HEK293T (cell line): ENCODE measurements at regions of chr2 and their contacts with region 1.

Region 1: DNA sequence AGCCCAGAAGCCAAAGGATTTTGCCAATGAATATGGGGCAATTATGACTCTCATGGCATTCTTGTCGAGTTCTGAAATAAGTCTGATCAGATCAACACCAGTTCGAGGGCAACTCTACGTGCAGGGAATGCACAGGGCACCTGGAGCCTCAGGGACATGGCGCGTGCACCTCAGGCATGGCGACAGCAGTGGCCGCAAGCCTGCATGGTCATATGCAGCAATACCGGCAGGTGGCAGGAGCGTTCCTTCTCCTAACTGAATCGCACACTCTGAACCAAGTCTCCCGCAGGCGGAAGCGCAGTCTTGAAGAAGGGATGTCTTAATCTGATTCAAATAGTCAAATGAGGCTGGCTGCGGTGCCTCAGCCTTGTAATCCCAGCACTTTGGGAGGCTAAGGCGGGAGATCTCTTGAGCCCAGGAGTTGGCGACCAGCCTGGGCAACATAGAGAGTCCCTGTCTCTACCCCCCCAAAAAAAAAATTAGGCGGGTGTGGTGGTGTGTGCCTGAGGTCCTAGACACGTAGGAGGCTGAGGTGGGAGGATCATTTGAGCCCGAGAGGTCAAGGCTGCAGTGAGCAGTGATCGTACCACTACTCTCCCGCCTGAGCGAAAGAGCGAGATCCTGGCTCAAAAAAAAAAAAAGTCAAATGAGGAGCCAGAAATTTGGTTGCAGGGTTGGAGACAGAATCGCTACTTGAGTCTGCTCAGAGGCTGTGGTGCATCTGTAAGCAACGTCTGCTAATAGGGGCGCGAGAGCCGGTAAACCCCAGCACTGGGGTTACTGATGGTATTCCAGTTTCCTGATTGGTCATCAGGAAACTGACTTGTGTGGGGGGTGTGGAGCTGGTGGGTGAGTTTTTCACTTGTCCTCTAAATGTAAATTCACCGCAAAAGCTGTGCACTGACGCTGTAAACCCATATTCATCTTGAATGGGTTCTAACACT is 28.8 kb downstream of the FHL2 start:
- DNase-seq: peak; percentile 85

Region 2: DNA sequence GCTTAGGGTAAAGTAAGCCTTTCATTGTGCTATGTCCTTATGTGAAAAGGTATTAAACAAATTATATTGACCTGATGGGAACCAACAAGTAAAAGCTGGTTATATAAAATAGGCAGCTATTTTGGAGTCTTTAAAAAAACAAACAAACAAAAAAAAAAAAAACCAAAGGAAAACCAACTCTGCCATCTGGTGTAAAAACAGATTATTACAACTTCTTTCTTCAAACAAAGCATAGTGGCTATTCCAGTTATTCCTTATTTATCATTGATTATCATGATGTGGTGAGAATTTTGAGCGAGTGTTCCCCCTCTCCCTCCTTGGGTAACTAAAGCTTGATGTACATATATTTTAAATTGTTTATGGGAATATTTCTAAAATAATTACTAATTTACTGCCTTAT is 151.2 kb after region 1 on chr2:
- CTCF ChIA-PET with region 1: interaction called, 13 read pairs
- POLR2A ChIA-PET with region 1: no interaction called
- DNase-seq: no peak